Heart left ventricle (tissue), 16 donors: ENCODE measurements at regions of chrX and their contacts with region 1.

Region 1: DNA sequence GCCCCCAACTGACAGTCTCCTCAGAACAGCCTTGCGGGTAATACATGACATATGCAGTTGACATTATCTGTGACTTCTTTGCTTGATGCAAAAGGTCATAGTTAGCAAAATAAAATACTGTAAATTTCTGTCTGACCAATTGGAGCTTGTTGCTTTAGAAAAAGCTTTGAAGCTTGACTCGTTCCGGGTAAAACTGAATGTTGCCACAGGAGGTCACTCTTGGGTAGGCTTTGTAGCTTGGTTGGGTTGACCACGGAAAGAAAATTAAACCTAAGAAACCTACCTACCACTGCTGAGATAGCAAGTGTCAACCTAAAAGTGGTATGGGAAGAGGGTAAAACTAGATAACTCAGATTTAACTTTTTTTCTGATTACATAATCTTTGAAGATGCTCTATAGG is 23.2 kb downstream of the PRPS2 start:
- DNase-seq: peak in 2 of 5 donors; percentile 8 to 20
- ATAC-seq: peak in 1 of 4 donors; percentile 39
- H3K4me3 ChIP-seq: no peak overlapping the region
- H3K27ac ChIP-seq: no peak overlapping the region
- H3K4me1 ChIP-seq: no peaks in the 10 kb centered on the region
- H3K27me3 ChIP-seq: peaks cover 0 to 19% (median 0%) of the 10 kb centered on the region in 9 donors
- CTCF ChIP-seq: peak; percentile 11 to 51 (median 37)
- POLR2A ChIP-seq: no peak

Region 2: GRCh38 chrX:12894074-12895030 is 79.9 kb after region 1 on chrX:
- intact Hi-C with region 1: loop called (anchors 5 to 10 kb)
- DNase-seq: peak in 1 of 5 donors; percentile 32
- ATAC-seq: no peak
- H3K4me3 ChIP-seq: no peak overlapping the region
- H3K27ac ChIP-seq: no peak overlapping the region
- H3K4me1 ChIP-seq: peaks cover 0 to 18% (median 0%) of the 10 kb centered on the region in 12 donors
- H3K27me3 ChIP-seq: no peaks in the 10 kb centered on the region
- CTCF ChIP-seq: peak; percentile 10 to 55 (median 46)
- POLR2A ChIP-seq: no peak